Activated naive CD4-positive, alpha-beta T cell treated with anti-CD3 and anti-CD28 coated beads for 36 hours (primary cell): ENCODE measurements at regions of chr10 and their contacts with region 1.

Region 1: DNA sequence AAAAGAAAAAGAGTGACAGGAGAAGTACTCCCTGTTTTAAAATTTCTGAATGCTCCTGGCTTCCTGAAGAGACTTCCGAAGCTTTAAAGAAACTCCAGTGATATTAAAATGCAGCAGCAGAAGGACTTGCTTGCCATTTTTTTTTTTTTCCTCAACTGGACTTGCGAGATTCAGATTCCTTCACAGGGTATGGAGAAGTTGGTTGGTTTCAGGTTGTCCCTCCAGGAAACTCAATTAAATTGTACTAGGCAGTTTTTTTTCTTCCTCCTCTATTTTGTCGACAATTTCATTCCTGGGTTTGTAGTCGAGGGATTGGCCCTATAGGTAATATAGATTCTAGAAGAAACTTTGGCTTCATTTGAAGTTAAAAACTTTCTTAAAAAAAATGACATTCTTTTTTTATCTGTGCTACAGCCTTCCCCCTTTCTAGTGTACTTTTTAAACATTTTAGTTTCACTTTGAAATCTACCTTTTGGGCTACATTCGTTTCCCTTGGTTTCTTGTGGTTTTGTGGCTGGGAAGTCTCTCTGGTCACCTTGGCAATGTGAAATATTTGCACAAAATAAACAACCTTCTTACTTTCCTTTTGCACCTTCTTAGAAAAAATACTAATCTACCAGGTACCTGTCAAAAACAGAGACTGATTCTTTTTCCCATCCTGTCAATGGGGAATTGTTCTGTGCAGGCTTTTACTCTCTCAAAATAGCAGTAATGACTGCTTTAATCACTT is 350.1 kb downstream of the GATA3 start:
- DNase-seq: peak; percentile 53
- H3K4me3 Mint-ChIP-seq: peak overlapping the region; percentile 4
- H3K27ac Mint-ChIP-seq: no peak overlapping the region
- H3K4me1 Mint-ChIP-seq: peaks cover 58% of the 10 kb centered on the region
- H3K27me3 Mint-ChIP-seq: no peaks in the 10 kb centered on the region

Region 2: DNA sequence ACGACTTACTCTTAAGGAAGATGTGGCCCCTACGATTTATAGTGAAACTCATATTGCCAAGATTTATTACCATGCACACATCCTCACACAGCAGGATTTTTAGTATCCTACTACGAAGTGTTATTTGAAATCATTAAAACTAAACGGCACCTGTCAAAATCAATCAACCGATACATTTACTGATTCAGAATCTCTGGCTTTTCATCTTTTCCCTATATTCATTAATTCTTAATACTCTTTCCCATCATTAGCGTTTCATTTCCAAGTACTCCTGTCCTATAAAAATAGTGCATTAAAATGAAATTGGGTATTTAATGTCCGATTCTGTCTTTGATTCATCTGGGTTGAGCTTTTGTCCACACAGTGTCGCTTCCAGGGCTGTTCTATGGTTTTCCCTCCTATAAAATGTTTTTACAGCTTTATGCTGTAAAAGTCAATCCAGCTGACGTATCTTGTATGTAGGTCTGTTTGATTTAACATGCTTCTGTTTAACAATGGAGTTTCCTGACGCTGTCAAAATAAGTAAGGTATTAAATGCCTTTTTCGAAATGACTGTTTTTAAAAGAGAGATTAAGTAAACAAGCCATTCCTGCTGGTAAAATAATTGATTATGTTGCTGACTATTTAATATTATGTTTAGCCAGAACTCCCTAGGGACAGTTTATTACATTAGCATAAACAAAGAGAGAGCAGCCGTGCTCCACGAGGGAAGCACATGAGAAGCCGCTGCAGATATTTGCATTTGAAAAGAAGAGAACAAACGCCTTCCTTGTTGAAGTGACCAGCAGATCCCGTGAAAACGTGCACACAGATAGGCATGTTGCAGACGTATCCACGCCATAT is 971.5 kb before region 1 on chr10:
- CTCF ChIA-PET with region 1: no interaction called
- intact Hi-C with region 1: no loop called
- DNase-seq: no peak
- H3K4me3 Mint-ChIP-seq: no peak overlapping the region
- H3K27ac Mint-ChIP-seq: no peak overlapping the region
- H3K4me1 Mint-ChIP-seq: peaks cover 7% of the 10 kb centered on the region
- H3K27me3 Mint-ChIP-seq: no peaks in the 10 kb centered on the region

Region 3: GRCh38 chr10:8325024-8325980 is 79.3 kb before region 1 on chr10:
- CTCF ChIA-PET with region 1: no interaction called
- intact Hi-C with region 1: loop called (anchors 2 kb)
- DNase-seq: peak; percentile 34
- H3K4me3 Mint-ChIP-seq: no peak overlapping the region
- H3K27ac Mint-ChIP-seq: no peak overlapping the region
- H3K4me1 Mint-ChIP-seq: peaks cover 23% of the 10 kb centered on the region
- H3K27me3 Mint-ChIP-seq: peaks cover 20% of the 10 kb centered on the region

Region 4: DNA sequence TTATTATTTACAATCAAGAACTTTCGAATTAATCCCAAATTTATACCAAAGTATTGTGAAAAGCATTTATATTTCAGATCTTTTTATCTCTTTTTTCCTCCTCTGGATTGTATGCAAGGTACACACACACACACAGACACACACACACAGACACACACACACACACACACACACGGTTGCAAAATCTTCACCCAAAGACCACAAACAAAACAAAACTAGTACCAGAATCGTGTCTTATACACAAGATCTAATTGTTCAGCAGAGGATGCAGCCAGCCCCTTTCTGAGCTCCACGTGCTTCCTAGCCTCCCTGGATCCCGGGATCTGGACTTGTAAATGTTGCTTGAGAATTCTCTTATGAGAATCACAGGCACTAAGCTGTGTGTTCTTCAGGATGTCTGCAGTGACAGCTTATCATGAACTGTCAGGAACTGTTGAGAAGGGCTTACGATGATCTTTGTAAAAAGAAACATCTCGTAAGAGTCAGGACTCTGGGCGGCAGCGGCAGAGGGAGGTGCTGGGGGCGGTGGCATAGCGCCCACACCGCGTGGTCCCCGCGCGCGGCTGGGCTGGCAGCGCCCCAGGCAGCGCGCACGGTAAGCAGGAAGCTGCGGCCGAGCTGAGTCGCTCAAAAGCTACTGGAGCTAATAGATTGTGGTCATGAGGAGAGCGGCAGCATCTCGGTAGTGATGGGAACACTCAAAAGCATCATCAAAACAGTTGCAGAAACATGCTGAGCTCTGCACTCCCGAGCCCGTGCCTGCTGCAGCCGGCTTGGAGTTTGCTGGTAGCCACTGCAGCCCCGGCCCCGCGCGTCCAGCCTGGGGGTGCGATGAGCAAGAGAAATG is 72.5 kb before region 1 on chr10:
- CTCF ChIA-PET with region 1: no interaction called
- intact Hi-C with region 1: loop called (anchors 2 kb)
- DNase-seq: peak; percentile 80
- H3K4me3 Mint-ChIP-seq: peak overlapping the region; percentile 75
- H3K27ac Mint-ChIP-seq: no peak overlapping the region
- H3K4me1 Mint-ChIP-seq: peaks cover 20% of the 10 kb centered on the region
- H3K27me3 Mint-ChIP-seq: peaks cover 13% of the 10 kb centered on the region

Region 5: GRCh38 chr10:8584666-8585065 is 180.1 kb after region 1 on chr10:
- CTCF ChIA-PET with region 1: no interaction called
- intact Hi-C with region 1: no loop called
- DNase-seq: no peak
- H3K4me3 Mint-ChIP-seq: no peak overlapping the region
- H3K27ac Mint-ChIP-seq: no peak overlapping the region
- H3K4me1 Mint-ChIP-seq: no peaks in the 10 kb centered on the region
- H3K27me3 Mint-ChIP-seq: peaks cover 27% of the 10 kb centered on the region